OCI-LY7 (cell line): ENCODE measurements at regions of chr6 and their contacts with region 1.

Region 1: GRCh38 chr6:132768051-132768517 is 10.4 kb upstream of the VNN2 start:
- DNase-seq: peak; percentile 59
- H3K4me3 ChIP-seq: peak overlapping the region; percentile 26
- H3K27ac ChIP-seq: no peak overlapping the region
- H3K4me1 ChIP-seq: peaks cover 8% of the 10 kb centered on the region
- CTCF ChIP-seq: peak; percentile 88

Region 2: GRCh38 chr6:131909408-131910218 is 858.5 kb before region 1 on chr6:
- CTCF ChIA-PET with region 1: no interaction called
- POLR2A ChIA-PET with region 1: no interaction called
- intact Hi-C with region 1: loop called (anchors 10 kb)
- DNase-seq: peak; percentile 79
- H3K4me3 ChIP-seq: no peak overlapping the region
- H3K27ac ChIP-seq: no peak overlapping the region
- H3K4me1 ChIP-seq: peaks cover 6% of the 10 kb centered on the region
- CTCF ChIP-seq: peak; percentile 94

Region 3: DNA sequence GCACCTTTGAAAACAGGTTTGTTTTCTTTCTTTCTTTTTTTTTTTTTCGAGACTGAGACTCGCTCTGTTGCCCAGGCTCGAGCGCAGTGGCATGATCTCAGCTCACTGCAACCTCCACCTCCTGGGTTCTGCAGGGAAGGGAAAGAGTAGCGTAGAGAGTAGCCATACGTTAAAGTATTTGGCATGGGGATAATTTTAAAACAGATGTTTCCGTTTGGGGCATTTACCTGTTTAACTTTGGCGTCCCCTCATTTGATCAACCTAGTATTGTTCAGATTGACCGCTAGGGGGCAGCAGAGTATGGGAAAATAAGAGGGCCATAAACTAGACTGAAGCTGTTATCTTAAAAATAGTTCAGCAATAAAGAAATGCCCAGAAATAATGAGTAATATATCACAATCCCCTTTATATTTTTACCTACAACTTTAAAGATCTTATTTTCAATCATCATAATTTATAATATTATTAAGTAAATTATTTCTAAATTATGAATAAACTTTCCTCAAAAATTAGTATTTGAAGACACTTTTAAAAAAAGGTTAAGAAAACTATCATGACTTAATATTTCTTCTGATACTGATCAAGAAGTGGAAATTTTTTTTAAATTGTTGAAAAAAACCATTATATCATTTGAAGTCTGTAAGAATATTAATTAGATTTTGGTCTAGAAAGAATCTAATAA is 237.7 kb before region 1 on chr6:
- CTCF ChIA-PET with region 1: no interaction called
- POLR2A ChIA-PET with region 1: interaction called, 3 read pairs
- intact Hi-C with region 1: loop called (anchors 1 kb)
- DNase-seq: peak; percentile 82
- H3K4me3 ChIP-seq: peak overlapping the region; percentile 63
- H3K27ac ChIP-seq: no peak overlapping the region
- H3K4me1 ChIP-seq: peaks cover 7% of the 10 kb centered on the region
- CTCF ChIP-seq: peak; percentile 87

Region 4: GRCh38 chr6:132669690-132670291 is 98.3 kb before region 1 on chr6:
- CTCF ChIA-PET with region 1: interaction called, 7 read pairs
- POLR2A ChIA-PET with region 1: interaction called, 5 read pairs
- intact Hi-C with region 1: loop called (anchors 1 kb)
- DNase-seq: peak; percentile 80
- H3K4me3 ChIP-seq: peak overlapping the region; percentile 27
- H3K27ac ChIP-seq: no peak overlapping the region
- H3K4me1 ChIP-seq: peaks cover 9% of the 10 kb centered on the region
- CTCF ChIP-seq: peak; percentile 93

Region 5: GRCh38 chr6:132750455-132751248 is 17.4 kb before region 1 on chr6:
- CTCF ChIA-PET with region 1: no interaction called
- POLR2A ChIA-PET with region 1: interaction called, 11 read pairs
- intact Hi-C with region 1: no loop called
- DNase-seq: no peak
- H3K4me3 ChIP-seq: no peak overlapping the region
- H3K27ac ChIP-seq: no peak overlapping the region
- H3K4me1 ChIP-seq: peaks cover 12% of the 10 kb centered on the region
- CTCF ChIP-seq: no peak

Region 6: DNA sequence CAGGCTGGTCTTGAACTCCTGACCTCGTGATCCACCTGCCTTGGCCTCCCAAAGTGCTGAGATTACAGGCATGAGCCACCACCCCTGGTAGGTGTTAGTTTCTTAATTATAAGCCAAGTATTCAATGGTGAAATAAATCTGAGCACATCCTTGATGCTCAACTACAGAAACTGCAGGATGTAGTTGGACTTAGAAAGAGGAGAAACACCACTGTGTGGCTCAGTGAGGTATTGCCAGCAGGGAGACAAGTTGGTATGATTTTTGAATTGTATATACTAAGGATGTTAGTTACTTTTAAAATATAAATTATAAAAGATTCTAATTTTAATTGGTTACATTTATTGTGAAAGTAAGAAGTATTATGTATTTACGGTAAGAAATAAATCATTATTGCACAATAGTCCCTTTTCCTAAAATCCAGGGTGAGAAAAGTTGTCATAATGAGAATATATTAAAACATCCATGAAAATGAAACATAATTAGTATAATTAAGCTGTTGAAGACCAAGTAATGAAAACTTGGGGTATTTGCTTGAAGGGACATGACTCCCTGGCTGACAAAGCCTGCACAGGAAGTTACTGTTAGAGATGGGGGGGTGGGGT is 12.8 kb after region 1 on chr6:
- CTCF ChIA-PET with region 1: no interaction called
- POLR2A ChIA-PET with region 1: interaction called, 12 read pairs
- intact Hi-C with region 1: no loop called
- DNase-seq: peak; percentile 54
- H3K4me3 ChIP-seq: no peak overlapping the region
- H3K27ac ChIP-seq: no peak overlapping the region
- H3K4me1 ChIP-seq: no peaks in the 10 kb centered on the region
- CTCF ChIP-seq: peak; percentile 70

Region 7: DNA sequence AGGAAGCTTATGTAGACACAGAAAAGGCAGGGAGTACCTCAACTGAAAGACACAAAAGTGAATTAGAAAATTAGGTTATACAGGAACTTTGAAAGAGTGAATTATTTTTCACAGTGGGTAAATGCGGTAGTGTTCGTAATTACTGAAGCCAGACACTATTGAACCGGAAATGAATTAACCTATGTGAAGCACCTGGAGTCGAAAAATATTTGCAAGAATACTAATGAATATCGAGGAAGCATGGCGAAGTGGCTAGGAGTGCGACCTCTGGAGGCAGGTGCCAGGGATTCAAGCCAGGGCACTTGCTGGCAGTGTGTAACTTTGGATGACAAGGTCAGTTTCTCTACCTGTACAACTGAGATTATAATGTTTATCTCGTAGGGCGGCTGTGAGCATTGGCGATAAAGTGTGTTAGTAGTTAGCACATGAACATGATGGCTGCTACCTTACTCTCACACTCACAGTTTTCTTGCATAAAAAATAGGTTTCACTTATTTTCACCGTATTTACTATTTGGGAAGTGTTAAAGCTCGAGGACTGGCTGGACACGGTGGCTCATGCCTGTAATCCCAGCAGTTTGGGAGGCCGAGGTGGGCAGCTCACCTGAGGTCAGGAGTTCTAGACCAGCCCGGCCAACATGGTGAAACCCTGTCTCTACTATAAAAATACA is 30.9 kb after region 1 on chr6:
- CTCF ChIA-PET with region 1: no interaction called
- POLR2A ChIA-PET with region 1: interaction called, 10 read pairs
- intact Hi-C with region 1: no loop called
- DNase-seq: peak; percentile 88
- H3K4me3 ChIP-seq: no peak overlapping the region
- H3K27ac ChIP-seq: no peak overlapping the region
- H3K4me1 ChIP-seq: peaks cover 7% of the 10 kb centered on the region
- CTCF ChIP-seq: peak; percentile 94

Region 8: DNA sequence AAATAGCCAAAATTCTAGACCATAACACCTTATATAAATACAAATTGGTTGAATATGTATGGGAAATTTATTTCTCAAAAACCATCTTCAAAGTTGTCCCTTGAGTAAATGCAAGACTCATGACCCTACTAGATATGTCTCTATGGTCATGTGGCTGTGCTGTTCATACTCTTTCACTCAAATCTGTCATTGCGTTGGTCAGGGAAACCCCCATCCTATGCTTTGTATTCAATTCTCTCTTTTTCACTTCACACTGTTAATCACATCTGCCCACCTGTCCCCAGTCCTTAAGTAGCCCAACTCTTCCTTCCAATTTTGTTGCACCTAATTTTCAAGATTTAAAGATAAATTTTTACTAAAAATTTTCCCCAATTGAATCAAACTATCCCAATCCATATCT is 97.3 kb after region 1 on chr6:
- CTCF ChIA-PET with region 1: no interaction called
- POLR2A ChIA-PET with region 1: no interaction called
- intact Hi-C with region 1: no loop called
- DNase-seq: no peak
- H3K4me3 ChIP-seq: no peak overlapping the region
- H3K27ac ChIP-seq: no peak overlapping the region
- H3K4me1 ChIP-seq: no peaks in the 10 kb centered on the region
- CTCF ChIP-seq: no peak

Region 9: GRCh38 chr6:133502441-133503259 is 734.6 kb after region 1 on chr6:
- CTCF ChIA-PET with region 1: no interaction called
- POLR2A ChIA-PET with region 1: no interaction called
- intact Hi-C with region 1: no loop called
- DNase-seq: no peak
- H3K4me3 ChIP-seq: no peak overlapping the region
- H3K27ac ChIP-seq: no peak overlapping the region
- H3K4me1 ChIP-seq: no peaks in the 10 kb centered on the region
- CTCF ChIP-seq: no peak